ENCODE measurements at regions of chr19 and their contacts with region 1.

Region 1: DNA sequence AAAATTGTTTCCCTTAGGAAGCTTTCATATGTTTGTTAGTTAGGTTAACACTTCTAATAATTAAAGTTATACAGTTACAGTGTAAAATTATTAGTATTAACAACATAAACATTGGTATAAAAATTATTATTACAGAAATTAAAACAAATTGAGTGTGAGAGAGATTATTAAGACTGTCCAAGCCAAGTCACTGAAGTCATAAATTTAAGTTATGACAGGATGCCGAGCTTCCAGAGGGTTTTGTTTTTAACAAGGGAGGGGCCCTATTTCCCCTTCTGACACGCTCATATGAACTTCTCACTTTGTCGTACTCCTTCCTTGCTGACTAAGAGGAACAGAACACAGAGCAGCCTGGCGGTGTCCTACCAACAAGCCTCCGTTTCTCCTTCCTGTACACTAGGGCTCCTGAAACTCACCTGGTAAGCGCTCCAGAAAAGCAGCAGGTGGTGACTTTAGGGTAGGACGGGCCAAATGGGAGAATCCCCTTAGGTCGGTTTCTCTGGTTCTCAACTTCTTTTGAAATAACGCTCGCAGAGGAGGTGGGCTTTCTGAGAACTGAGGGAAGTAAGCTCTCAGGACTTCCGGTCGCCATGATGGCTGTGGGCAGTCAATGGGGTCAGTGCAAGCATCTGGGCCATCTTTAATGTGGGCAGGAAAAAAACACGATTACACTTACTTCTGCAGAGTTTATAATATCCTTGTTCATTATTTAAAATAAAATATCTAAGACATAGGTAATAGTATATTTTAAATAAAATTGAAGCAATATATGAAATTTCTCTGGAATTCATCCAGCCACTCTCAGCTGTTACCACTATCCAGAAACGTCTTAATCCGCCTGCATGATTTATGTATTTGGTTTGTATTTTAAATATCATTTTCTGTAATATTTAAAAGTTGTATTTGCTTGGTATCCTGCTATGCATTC is at the start of gene CARD8:
- DNase-seq: peak; percentile 85 to 91 (median 85)
- ATAC-seq: peak; percentile 94 to 97 (median 96)
- H3K4me3 ChIP-seq: peak within 1 kb of the TSS; percentile 22 to 90 (median 68)
- H3K27ac ChIP-seq: peak within 1 kb of the TSS; percentile 81 to 99 (median 94)
- H3K4me1 ChIP-seq: peaks cover 0 to 71% (median 23%) of the 10 kb centered on the region in 12 donors
- H3K27me3 ChIP-seq: no peaks in the 10 kb centered on the region
- CTCF ChIP-seq: peak in 2 of 12 donors; percentile 11 to 27
- POLR2A ChIP-seq: peak in 1 of 2 donors; percentile 52
- total RNA-seq, gene CARD8: 18.3 to 49.0 (median 28.8) TPM

Region 2: GRCh38 chr19:48102870-48103751 is 152.5 kb before region 1 on chr19:
- intact Hi-C with region 1: loop called in 6 of 10 experiments (anchors 5 to 10 kb)
- DNase-seq: no peak
- ATAC-seq: no peak
- H3K4me3 ChIP-seq: no peak overlapping the region
- H3K27ac ChIP-seq: no peak overlapping the region
- H3K4me1 ChIP-seq: peaks cover 0 to 12% (median 10%) of the 10 kb centered on the region in 12 donors
- H3K27me3 ChIP-seq: no peaks in the 10 kb centered on the region
- CTCF ChIP-seq: peak; percentile 31 to 69 (median 52)
- POLR2A ChIP-seq: no peak

Region 3: DNA sequence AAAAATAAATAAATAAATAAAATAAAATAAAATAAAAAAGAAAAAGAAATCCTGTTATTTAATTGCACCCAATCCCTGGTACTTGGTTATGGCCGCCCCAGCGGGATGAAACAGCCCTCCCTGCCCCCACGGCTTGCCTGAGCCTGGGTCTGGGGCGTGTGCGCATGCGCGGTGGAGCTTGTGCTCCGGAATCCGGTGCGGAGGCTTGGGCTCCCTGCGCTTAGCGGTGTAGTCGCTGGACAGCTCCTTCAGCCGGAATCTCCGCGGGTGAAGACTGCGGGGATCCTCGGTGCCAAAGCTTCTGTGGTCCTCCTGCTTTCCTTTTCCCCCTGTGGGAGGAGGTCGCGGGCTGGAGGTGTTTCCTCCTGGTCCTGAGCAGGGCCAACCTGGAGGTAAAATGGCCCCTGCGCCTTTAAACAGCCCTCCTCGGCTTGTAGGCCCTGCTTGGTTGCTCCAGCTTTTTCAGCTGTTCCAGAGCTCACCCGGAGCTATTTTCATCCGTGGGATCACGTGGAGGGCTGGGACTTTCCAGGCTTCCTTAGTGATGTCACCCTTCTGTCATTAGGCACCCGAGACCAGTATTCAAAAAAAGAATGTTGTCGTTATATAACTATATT is 145.2 kb before region 1 on chr19 and contains the start of gene PLA2G4C:
- intact Hi-C with region 1: loop called in 6 of 10 experiments (anchors 5 to 10 kb)
- DNase-seq: peak; percentile 93 to 97 (median 94)
- ATAC-seq: peak; percentile 95 to 96 (median 96)
- H3K4me3 ChIP-seq: peak within 1 kb of the TSS; percentile 36 to 68 (median 58)
- H3K27ac ChIP-seq: peak within 1 kb of the TSS; percentile 87 to 100 (median 96)
- H3K4me1 ChIP-seq: peaks cover 0 to 42% (median 21%) of the 10 kb centered on the region in 12 donors
- H3K27me3 ChIP-seq: no peaks in the 10 kb centered on the region
- CTCF ChIP-seq: no peak
- POLR2A ChIP-seq: peak in 1 of 2 donors; percentile 70
- total RNA-seq, gene PLA2G4C: 16.6 to 71.5 (median 41.6) TPM

Region 4: GRCh38 chr19:48203732-48204628 is 51.7 kb before region 1 on chr19:
- intact Hi-C with region 1: loop called in 3 of 10 experiments (anchors 5 to 10 kb)
- DNase-seq: peak; percentile 93 to 96 (median 96)
- ATAC-seq: peak; percentile 100
- H3K4me3 ChIP-seq: peak overlapping the region; percentile 8 to 97 (median 71)
- H3K27ac ChIP-seq: peak overlapping the region in 11 of 12 donors; percentile 50 to 84 (median 69)
- H3K4me1 ChIP-seq: peaks cover 0 to 25% (median 12%) of the 10 kb centered on the region in 12 donors
- H3K27me3 ChIP-seq: no peaks in the 10 kb centered on the region
- CTCF ChIP-seq: peak in 2 of 12 donors; percentile 2 to 32
- POLR2A ChIP-seq: peak in 1 of 2 donors; percentile 69

Region 5: DNA sequence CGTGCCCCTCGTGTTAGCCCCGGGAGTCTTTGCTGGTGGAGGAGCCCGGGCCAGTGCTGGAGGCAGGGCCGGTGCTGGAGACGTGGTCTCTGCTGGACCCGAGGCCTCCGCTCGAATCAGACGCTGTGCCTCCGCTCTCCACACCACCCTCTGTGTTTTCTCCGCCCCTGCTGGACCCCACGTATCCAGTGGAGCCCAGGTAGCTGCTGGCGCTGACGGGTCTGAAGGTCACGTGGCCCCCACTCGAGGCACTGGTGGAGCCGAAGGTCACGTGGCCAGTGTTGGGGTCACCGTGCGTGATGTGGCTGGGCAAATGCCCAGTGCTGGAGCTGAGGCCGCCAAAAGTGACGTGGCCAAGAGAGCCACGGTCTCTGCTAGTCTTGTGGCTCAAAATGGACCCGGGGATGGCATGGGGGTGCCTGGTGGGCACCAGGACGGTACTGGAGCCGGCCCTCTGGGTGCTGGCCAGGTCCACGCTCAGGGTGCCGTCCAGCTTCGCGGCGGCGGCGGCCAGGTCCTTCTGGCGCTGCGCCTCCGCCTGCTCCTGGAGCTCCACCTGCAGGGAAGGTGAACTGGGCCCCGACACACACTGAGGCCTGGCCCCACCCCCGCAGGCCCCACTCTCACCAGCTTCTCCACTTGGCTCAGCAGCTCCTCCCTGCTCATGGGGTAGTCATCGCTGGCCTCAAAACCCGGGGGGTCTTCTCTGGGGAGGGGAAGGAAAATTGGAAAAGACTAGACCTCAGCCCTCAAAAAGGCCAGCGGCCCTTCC is 41.5 kb after region 1 on chr19:
- intact Hi-C with region 1: no loop called
- DNase-seq: no peak
- ATAC-seq: peak in 1 of 4 donors; percentile 42
- H3K4me3 ChIP-seq: no peak overlapping the region
- H3K27ac ChIP-seq: no peak overlapping the region
- H3K4me1 ChIP-seq: no peaks in the 10 kb centered on the region
- H3K27me3 ChIP-seq: peaks cover 0 to 3% (median 0%) of the 10 kb centered on the region in 9 donors
- CTCF ChIP-seq: no peak
- POLR2A ChIP-seq: no peak

Region 6: GRCh38 chr19:48333467-48334384 is 78.1 kb after region 1 on chr19:
- intact Hi-C with region 1: loop called in 1 of 10 experiments (anchors 10 kb)
- DNase-seq: peak; percentile 88 to 97 (median 93)
- ATAC-seq: peak; percentile 68 to 87 (median 86)
- H3K4me3 ChIP-seq: peak overlapping the region; percentile 9 to 63 (median 50)
- H3K27ac ChIP-seq: peak overlapping the region; percentile 51 to 93 (median 87)
- H3K4me1 ChIP-seq: peaks cover 0 to 57% (median 25%) of the 10 kb centered on the region in 12 donors
- H3K27me3 ChIP-seq: no peaks in the 10 kb centered on the region
- CTCF ChIP-seq: peak; percentile 72 to 96 (median 87)
- POLR2A ChIP-seq: no peak

Region 7: DNA sequence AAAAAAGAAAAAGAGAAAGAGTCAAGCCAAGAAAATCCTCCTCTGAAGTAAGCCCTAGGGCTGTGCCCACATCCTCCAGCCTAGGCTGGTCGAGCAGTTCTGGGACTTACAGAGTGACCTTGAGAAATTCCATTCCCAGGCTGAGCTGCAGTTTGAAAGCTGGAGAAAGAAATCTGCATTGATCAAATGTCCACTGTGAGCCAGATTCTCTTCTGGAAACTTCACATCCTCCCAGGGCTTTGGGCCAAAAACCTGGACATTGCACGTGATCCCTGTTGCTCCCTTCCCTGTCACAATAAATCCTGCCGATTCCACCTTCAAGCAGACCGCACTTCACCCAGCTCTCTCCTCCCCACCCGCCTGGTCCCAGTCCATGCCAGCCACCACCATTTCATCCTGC is 92.4 kb after region 1 on chr19:
- intact Hi-C with region 1: no loop called
- DNase-seq: peak in 1 of 5 donors; percentile 28
- ATAC-seq: peak in 3 of 4 donors; percentile 23 to 61 (median 36)
- H3K4me3 ChIP-seq: no peak overlapping the region
- H3K27ac ChIP-seq: peak overlapping the region in 4 of 12 donors; percentile 9 to 48 (median 36)
- H3K4me1 ChIP-seq: peaks cover 0 to 10% (median 3%) of the 10 kb centered on the region in 12 donors
- H3K27me3 ChIP-seq: no peaks in the 10 kb centered on the region
- CTCF ChIP-seq: no peak
- POLR2A ChIP-seq: no peak